Activated CD8-positive, alpha-beta T cell treated with anti-CD3 and anti-CD28 coated beads for 36 hours (primary cell): ENCODE measurements at regions of chr18 and their contacts with region 1.

Region 1: DNA sequence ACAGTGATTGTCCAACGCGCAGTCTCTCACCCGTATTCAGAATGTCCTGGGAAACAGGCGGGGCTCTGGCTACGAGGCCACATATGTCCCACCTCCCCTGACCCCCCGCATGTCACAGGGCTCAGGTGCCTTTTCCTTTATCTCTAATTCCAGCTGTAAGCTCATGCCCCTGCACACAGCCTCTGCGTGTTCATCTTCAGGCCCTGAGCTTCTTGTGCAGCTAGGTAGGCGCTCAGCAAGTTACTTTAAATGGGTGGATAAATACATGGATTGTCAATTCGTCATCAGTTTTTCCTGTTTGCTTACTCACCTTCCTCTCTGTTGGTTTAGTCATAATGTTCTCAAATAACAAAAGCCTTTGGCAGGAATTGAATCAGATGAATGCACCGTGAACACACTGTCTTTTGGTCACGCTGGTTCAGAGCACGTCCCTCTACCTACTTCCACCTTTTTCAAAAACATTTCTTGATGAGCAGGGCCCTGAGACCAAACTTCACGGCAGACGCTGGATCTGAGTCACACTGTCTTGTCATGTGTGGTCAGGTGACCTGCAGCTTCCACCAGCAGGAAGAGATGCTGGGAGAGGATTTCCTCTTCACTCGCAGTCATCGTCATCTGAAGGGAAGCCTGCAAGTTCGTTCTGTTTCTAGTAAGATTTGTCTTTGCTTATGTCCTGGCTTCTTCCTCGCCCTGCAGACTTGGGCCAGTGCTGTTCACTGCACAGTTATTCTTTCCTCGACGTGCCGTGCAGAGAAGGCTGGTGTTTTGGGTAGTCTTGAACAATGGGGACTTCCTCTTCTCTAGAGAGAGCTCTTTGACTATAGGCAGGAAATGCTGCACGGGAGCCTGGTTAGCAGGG is 138.1 kb downstream of the PTGR3 start:
- DNase-seq: peak; percentile 82
- ATAC-seq: peak; percentile 90
- H3K4me3 Mint-ChIP-seq: peak overlapping the region; percentile 71
- H3K27ac Mint-ChIP-seq: peak overlapping the region; percentile 98
- H3K4me1 Mint-ChIP-seq: peaks cover 28% of the 10 kb centered on the region
- H3K27me3 Mint-ChIP-seq: no peaks in the 10 kb centered on the region
- CTCF ChIP-seq: no peak

Region 2: DNA sequence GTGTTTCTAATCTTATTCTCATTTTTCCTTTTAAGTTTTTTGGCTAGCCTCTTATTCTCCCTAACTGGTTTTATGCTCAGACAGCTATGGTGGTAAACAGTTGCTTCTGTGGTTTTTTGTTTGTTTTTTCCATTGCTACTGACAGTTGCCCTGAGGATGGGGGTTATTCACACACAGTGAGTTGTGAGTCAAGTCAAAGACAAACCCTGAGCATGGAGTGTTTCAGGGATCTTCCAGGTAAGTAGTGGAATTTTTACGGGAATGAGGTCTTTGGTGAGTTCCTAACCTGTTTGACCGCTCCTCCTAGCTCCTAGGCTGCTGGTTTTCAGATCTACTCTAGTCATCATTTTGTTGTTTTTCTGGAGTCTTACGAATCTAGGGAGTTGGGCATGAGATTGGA is 310.4 kb before region 1 on chr18:
- CTCF ChIA-PET with region 1: no interaction called
- POLR2A ChIA-PET with region 1: no interaction called
- intact Hi-C with region 1: no loop called
- DNase-seq: no peak
- ATAC-seq: no peak
- H3K4me3 Mint-ChIP-seq: no peak overlapping the region
- H3K27ac Mint-ChIP-seq: no peak overlapping the region
- H3K4me1 Mint-ChIP-seq: no peaks in the 10 kb centered on the region
- H3K27me3 Mint-ChIP-seq: no peaks in the 10 kb centered on the region
- CTCF ChIP-seq: no peak

Region 3: DNA sequence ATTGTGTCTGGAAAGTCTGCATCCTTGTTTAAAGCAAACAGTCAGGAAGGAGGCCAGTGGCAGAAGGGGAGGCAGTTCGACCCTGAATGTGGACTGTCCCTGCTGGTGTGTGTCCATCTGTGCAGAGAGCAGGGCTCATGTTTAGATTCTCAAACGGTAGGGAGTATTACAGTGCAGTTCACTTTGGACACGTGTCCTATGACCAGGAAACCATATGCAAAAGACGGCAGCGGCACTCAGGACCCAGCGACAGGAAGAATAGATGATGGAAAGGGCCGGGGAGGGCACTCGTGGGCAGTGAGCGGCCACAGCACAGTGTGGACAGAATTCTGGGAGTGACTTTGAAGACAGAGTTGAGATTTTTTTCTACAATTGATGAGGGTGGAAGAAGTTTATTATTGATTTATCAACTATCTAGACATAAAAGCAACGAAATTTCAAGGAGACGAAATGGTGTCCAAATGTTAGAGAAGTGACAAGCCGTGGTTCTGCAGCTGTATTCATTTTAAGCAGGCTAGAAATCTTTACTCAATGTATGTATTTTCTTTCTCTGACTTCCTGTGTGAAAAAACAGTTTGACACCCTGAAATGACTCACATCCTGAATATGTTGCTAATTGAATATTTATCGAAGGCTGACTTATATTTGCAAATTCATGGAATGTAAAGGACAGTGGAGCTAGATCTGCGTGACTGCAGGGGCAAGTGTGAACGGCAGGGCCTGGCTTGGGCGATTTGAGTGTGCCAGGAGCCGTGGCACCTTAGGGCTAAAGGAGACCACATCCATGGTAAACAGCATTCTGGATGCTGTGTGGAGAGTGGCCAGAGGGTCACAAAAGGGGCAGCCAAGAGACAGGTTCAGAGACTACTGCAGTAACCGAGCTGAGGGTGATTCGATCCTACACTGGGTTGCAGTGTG is 76.1 kb before region 1 on chr18:
- CTCF ChIA-PET with region 1: no interaction called
- POLR2A ChIA-PET with region 1: interaction called, 3 read pairs
- intact Hi-C with region 1: loop called (anchors 10 kb)
- DNase-seq: peak; percentile 49
- ATAC-seq: peak; percentile 80
- H3K4me3 Mint-ChIP-seq: peak overlapping the region; percentile 59
- H3K27ac Mint-ChIP-seq: peak overlapping the region; percentile 94
- H3K4me1 Mint-ChIP-seq: peaks cover 45% of the 10 kb centered on the region
- H3K27me3 Mint-ChIP-seq: no peaks in the 10 kb centered on the region
- CTCF ChIP-seq: no peak